ENCODE measurements at regions of chr1 and their contacts with region 1.

Region 1: DNA sequence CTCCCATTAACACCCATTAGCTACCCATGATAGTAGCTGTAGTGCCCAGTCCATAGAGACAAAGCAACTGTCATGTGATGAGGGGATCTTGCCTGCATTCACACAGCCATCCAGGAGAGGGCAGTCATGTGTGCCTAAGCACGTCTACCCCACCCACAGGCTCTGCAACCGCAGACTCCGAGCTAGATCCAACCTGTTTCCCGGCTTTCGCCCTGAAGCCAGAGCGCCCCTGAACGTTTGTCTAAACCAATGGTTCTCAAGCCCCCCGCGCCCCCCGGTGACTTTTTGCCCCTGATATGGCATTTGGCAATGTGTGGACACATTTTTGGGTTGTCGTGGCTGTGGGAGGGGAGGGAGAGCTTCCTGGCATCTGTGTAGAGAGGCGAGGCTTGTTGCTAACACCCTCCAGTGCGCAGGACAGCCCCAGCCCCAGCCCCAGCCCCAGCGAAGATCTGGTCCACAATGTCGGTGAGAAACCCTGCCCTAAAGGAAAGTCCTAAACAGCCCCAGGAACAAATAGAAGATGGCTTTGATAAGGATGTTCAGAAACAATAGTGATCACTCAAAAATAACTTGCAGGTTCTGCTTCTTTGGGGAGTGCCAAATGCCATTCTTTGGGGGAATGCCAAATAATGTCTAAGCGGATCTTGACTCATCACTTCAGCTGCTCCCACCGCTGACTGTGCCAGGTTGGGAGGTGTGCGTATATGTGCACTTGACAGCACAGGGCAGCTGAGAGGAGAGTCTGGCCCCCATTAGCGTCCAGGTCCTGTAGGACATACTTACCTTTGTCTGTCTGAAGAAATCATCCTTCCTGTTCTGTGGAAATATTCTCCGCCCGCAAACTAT is 34.5 kb downstream of the SLC44A3 start:
- DNase-seq: peak; percentile 84
- H3K4me3 ChIP-seq: peak overlapping the region; percentile 63
- H3K27ac ChIP-seq: peak overlapping the region; percentile 74
- H3K4me1 ChIP-seq: peaks cover 36% of the 10 kb centered on the region
- H3K27me3 ChIP-seq: no peaks in the 10 kb centered on the region
- CTCF ChIP-seq: peak; percentile 95

Region 2: GRCh38 chr1:94599095-94599813 is 255.4 kb before region 1 on chr1:
- intact Hi-C with region 1: no loop called
- DNase-seq: no peak
- H3K4me3 ChIP-seq: no peak overlapping the region
- H3K27ac ChIP-seq: no peak overlapping the region
- H3K4me1 ChIP-seq: peaks cover 6% of the 10 kb centered on the region
- H3K27me3 ChIP-seq: no peaks in the 10 kb centered on the region
- CTCF ChIP-seq: peak; percentile 68

Region 3: DNA sequence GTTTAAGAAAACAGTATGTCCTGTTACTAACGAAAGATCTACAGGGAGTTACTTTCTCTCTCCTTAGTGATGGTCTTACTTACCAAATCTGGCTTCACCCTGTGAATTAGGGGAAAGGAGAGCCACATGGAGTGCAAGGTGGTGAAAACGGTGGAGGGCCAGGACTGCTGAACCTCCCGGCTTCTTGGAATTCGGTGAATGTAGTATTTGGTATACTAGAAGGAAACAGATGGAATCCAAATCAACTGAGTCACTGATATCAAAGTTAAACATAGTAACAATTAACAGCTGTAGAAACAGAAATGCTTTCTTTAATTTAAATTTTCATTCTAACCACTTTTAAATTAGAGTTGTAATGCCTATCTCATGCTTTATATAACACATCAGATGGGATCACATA is 172.4 kb after region 1 on chr1:
- intact Hi-C with region 1: no loop called
- DNase-seq: no peak
- H3K4me3 ChIP-seq: no peak overlapping the region
- H3K27ac ChIP-seq: no peak overlapping the region
- H3K4me1 ChIP-seq: peaks cover 17% of the 10 kb centered on the region
- H3K27me3 ChIP-seq: no peaks in the 10 kb centered on the region
- CTCF ChIP-seq: no peak

Region 4: GRCh38 chr1:95043141-95043980 is 188.7 kb after region 1 on chr1:
- intact Hi-C with region 1: loop called (anchors 5 kb)
- DNase-seq: peak; percentile 79
- H3K4me3 ChIP-seq: no peak overlapping the region
- H3K27ac ChIP-seq: peak overlapping the region; percentile 67
- H3K4me1 ChIP-seq: peaks cover 21% of the 10 kb centered on the region
- H3K27me3 ChIP-seq: no peaks in the 10 kb centered on the region
- CTCF ChIP-seq: peak; percentile 99

Region 5: DNA sequence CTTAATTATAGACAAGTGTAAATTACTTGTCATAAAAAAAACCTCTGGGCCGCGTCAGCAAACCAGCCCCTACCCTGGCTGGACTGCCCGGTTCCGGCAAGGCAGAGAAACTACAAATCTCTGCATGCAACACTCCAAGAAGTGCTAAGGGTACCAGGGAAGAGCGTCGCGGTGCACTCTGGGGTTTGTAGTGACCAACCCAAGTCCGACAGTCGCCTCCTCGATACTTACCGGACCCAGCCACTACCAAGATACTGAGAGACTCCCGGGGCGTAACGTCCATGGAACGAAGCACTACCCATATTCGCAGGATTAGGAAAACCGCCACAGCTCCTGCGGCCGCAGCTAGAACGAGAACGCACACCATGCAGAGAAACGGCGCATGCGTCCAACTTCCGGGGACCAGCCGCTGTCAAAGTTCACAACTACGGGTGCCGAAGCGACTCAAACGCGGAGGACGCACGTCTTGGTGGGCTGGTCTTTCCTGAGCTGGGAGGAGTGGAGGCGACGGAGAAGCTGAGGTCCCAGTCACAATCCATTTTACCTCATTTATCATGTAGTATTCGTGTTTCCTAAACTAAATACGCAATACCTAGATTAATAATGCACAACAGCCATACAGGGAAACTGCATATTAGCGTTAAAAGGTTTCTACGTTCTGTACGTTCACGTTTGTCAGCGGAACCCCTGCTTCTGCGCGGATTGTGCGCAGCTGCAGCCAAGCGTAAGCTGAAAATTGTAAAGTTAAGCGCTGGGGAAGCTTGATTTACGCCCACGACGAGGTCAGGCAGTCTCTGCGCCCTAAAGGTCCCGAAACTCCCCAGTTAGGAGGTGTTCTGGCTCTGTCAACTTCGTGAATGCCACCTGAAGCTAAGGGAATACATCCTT is 218.1 kb after region 1 on chr1 and contains the start of gene ALG14:
- intact Hi-C with region 1: no loop called
- DNase-seq: peak; percentile 94
- H3K4me3 ChIP-seq: peak within 1 kb of the TSS; percentile 75
- H3K27ac ChIP-seq: peak within 1 kb of the TSS; percentile 98
- H3K4me1 ChIP-seq: peaks cover 17% of the 10 kb centered on the region
- H3K27me3 ChIP-seq: peaks cover 3% of the 10 kb centered on the region
- CTCF ChIP-seq: no peak
- total RNA-seq, gene ALG14: 2.6 TPM

Measured in left ventricle myocardium inferior (tissue), 1 donor.